Thyroid gland (tissue), 4 donors: ENCODE measurements at regions of chr2 and their contacts with region 1.

Region 1: DNA sequence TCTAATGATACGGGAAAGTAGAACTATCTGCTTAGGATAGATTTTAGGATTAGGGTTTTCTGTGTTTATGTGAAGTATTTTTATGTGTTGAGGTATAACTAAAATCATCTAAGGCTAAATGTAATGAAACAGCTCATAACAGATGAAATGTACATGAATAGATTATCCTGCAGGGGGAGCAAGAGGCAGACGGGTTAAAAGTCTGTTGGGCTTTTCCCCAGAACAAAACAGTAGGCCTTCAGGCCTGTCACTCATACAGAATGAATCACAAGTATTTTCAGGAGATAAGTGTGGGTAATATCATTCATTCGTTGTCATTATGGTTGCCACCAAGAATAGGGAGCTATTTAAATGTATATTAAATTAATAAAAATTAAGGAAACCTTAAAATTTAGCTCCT is 107.9 kb upstream of the IL1R2 start:
- DNase-seq: no peak
- H3K4me3 ChIP-seq: no peak overlapping the region
- H3K27ac ChIP-seq: peak overlapping the region in 2 of 3 donors; percentile 20 to 36
- H3K4me1 ChIP-seq: peaks cover 12 to 14% of the 10 kb centered on the region in 2 donors
- H3K27me3 ChIP-seq: no peaks in the 10 kb centered on the region
- CTCF ChIP-seq: peak; percentile 12 to 70 (median 60)
- POLR2A ChIP-seq: no peak

Region 2: DNA sequence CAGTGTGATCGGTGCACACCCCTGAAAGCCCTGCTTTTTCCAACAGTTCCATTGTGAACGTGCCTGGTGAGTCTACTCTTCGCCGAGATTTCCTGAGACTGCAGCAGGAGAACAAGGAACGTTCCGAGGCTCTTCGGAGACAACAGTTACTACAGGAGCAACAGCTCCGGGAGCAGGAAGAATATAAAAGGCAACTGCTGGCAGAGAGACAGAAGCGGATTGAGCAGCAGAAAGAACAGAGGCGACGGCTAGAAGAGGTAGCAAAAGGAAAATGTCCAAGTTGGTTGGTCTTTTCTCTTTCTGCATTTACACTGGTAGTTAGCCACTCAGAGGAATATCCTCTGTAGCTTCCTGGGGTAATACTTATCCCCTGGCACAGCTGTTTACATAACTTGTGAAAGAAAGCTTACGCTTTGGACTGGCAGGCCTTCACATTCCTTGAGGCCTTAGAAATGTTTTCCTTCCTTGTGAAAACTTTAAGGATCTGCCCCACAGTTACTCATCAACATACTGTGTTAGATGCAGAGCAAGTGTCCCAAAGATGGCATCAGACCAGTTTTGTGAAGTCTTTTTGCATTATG is 39.7 kb before region 1 on chr2:
- intact Hi-C with region 1: no loop called
- DNase-seq: no peak
- H3K4me3 ChIP-seq: no peak overlapping the region
- H3K27ac ChIP-seq: no peak overlapping the region
- H3K4me1 ChIP-seq: peaks cover 8 to 16% of the 10 kb centered on the region in 2 donors
- H3K27me3 ChIP-seq: no peaks in the 10 kb centered on the region
- CTCF ChIP-seq: no peak
- POLR2A ChIP-seq: no peak

Region 3: GRCh38 chr2:101972621-101973434 is 89.0 kb after region 1 on chr2:
- intact Hi-C with region 1: loop called (anchors 10 kb)
- DNase-seq: no peak
- H3K4me3 ChIP-seq: no peak overlapping the region
- H3K27ac ChIP-seq: no peak overlapping the region
- H3K4me1 ChIP-seq: peaks cover 17 to 18% of the 10 kb centered on the region in 2 donors
- H3K27me3 ChIP-seq: no peaks in the 10 kb centered on the region
- CTCF ChIP-seq: no peak
- POLR2A ChIP-seq: no peak

Region 4: GRCh38 chr2:102005989-102006885 is 122.4 kb after region 1 on chr2:
- intact Hi-C with region 1: loop called (anchors 10 kb)
- DNase-seq: peak in 1 of 2 donors; percentile 32
- H3K4me3 ChIP-seq: no peak overlapping the region
- H3K27ac ChIP-seq: peak overlapping the region in 2 of 3 donors; percentile 54 to 78
- H3K4me1 ChIP-seq: peaks cover 18 to 29% of the 10 kb centered on the region in 2 donors
- H3K27me3 ChIP-seq: no peaks in the 10 kb centered on the region
- CTCF ChIP-seq: peak; percentile 26 to 67 (median 50)
- POLR2A ChIP-seq: no peak

Region 5: GRCh38 chr2:102240640-102241370 is 356.9 kb after region 1 on chr2:
- intact Hi-C with region 1: loop called (anchors 10 kb)
- DNase-seq: peak; percentile 93 to 95
- H3K4me3 ChIP-seq: no peak overlapping the region
- H3K27ac ChIP-seq: peak overlapping the region; percentile 83 to 89 (median 88)
- H3K4me1 ChIP-seq: peaks cover 9 to 32% of the 10 kb centered on the region in 2 donors
- H3K27me3 ChIP-seq: no peaks in the 10 kb centered on the region
- CTCF ChIP-seq: peak; percentile 95 to 98 (median 97)
- POLR2A ChIP-seq: peak in 1 of 2 donors; percentile 23

Region 6: DNA sequence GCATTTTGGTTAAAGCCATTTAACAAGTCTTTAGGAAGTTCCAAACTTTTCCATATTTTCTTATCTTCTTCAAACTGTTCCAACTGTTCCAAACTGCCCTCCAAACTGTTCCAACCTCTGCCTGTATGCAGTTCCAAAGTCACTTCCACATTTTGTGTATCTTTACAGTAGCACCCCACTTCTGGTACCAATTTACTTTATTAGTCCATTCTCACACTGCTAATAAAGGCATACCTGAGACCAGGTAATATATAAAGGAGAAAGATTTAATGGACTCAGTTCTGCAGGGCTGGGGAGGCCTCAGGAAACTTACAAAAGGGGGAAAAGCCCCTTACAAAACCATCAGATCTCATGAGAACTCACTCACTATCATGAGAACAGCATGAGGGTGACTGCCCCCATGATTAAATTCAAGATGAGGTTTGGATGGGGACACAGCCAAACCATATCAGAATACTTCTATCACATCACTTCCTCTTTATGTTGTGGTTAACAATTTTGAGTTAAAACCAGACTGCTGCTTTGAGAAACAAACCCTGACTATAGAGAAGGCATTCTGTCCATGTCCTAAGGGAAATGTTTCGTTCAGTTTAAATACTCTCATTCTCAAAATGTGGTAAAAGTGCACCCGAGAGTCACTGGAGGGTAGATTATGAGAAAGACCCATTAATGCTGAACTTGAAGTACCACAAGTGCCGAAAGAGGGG is 482.7 kb after region 1 on chr2:
- intact Hi-C with region 1: no loop called
- DNase-seq: no peak
- H3K4me3 ChIP-seq: no peak overlapping the region
- H3K27ac ChIP-seq: no peak overlapping the region
- H3K4me1 ChIP-seq: no peaks in the 10 kb centered on the region
- H3K27me3 ChIP-seq: no peaks in the 10 kb centered on the region
- CTCF ChIP-seq: no peak
- POLR2A ChIP-seq: no peak

Region 7: DNA sequence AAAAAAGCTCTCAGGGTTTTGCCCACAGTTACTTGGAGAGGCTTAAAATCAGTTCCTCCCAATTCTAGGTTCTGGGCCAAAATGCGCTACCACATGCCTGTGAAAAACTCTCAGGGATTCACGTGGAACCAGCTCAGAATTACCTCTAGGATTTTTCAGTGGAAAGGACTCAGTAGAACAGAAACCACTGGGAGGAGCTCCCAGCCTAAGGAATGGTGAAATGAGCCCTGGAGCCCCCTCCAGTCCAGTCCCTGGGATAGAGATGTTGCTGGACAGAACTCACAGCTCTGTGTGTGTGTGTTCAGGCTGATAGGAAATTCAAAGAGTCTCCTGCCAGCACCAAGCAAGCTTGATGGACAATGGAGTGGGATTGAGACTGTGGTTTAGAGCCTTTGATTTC is 568.1 kb after region 1 on chr2:
- intact Hi-C with region 1: loop called (anchors 10 kb)
- DNase-seq: no peak
- H3K4me3 ChIP-seq: no peak overlapping the region
- H3K27ac ChIP-seq: no peak overlapping the region
- H3K4me1 ChIP-seq: no peaks in the 10 kb centered on the region
- H3K27me3 ChIP-seq: no peaks in the 10 kb centered on the region
- CTCF ChIP-seq: no peak
- POLR2A ChIP-seq: no peak